ENCODE measurements at regions of chr14 and their contacts with region 1.

Region 1: GRCh38 chr14:57871459-57872080 is 5.7 kb upstream of the SLC35F4 start:
- DNase-seq: peak; percentile 2
- ATAC-seq: peak; percentile 96
- H3K4me3 ChIP-seq: no peak overlapping the region
- H3K27ac ChIP-seq: no peak overlapping the region
- H3K4me1 ChIP-seq: no peaks in the 10 kb centered on the region
- H3K27me3 ChIP-seq: no peaks in the 10 kb centered on the region
- CTCF ChIP-seq: peak; percentile 54 to 67 (median 60)
- EP300 ChIP-seq: no peak
- POLR2A ChIP-seq: no peak
- RAD21 ChIP-seq: peak; percentile 54

Region 2: GRCh38 chr14:57486767-57487379 is 384.7 kb before region 1 on chr14:
- CTCF ChIA-PET with region 1: interaction called, 16 read pairs
- POLR2A ChIA-PET with region 1: no interaction called
- RAD21 ChIA-PET with region 1: interaction called, 10 read pairs
- SMC1A ChIA-PET with region 1: interaction called, 7 read pairs
- in situ Hi-C with region 1: no loop called
- intact Hi-C with region 1: loop called (anchors 2 kb)
- DNase-seq: no peak
- ATAC-seq: peak; percentile 63
- H3K4me3 ChIP-seq: no peak overlapping the region
- H3K27ac ChIP-seq: no peak overlapping the region
- H3K4me1 ChIP-seq: peaks cover 11% of the 10 kb centered on the region
- H3K27me3 ChIP-seq: no peaks in the 10 kb centered on the region
- CTCF ChIP-seq: peak; percentile 59 to 76 (median 59)
- EP300 ChIP-seq: no peak
- POLR2A ChIP-seq: no peak
- RAD21 ChIP-seq: peak; percentile 59

Region 3: GRCh38 chr14:57526942-57527341 is 344.6 kb before region 1 on chr14:
- CTCF ChIA-PET with region 1: interaction called, 27 read pairs
- POLR2A ChIA-PET with region 1: no interaction called
- RAD21 ChIA-PET with region 1: interaction called, 5 read pairs
- SMC1A ChIA-PET with region 1: interaction called, 3 read pairs
- in situ Hi-C with region 1: no loop called
- intact Hi-C with region 1: no loop called
- DNase-seq: no peak
- ATAC-seq: peak; percentile 60
- H3K4me3 ChIP-seq: no peak overlapping the region
- H3K27ac ChIP-seq: no peak overlapping the region
- H3K4me1 ChIP-seq: no peaks in the 10 kb centered on the region
- H3K27me3 ChIP-seq: no peaks in the 10 kb centered on the region
- CTCF ChIP-seq: 0 out of 6 replicates have a peak, but pooled peaks of 1 of the 3 experiments have one; percentile 12
- EP300 ChIP-seq: no peak
- POLR2A ChIP-seq: no peak
- RAD21 ChIP-seq: no peak

Region 4: GRCh38 chr14:57574617-57575303 is 296.8 kb before region 1 on chr14:
- CTCF ChIA-PET with region 1: interaction called, 14 read pairs
- POLR2A ChIA-PET with region 1: no interaction called
- RAD21 ChIA-PET with region 1: no interaction called
- SMC1A ChIA-PET with region 1: interaction called, 5 read pairs
- in situ Hi-C with region 1: no loop called
- intact Hi-C with region 1: no loop called
- DNase-seq: no peak
- ATAC-seq: peak; percentile 44
- H3K4me3 ChIP-seq: no peak overlapping the region
- H3K27ac ChIP-seq: no peak overlapping the region
- H3K4me1 ChIP-seq: no peaks in the 10 kb centered on the region
- H3K27me3 ChIP-seq: no peaks in the 10 kb centered on the region
- CTCF ChIP-seq: peak in 1 of 3 experiments; percentile 37; a peak in 1 of 6 replicates
- EP300 ChIP-seq: no peak
- POLR2A ChIP-seq: no peak
- RAD21 ChIP-seq: no peak

Region 5: GRCh38 chr14:57692671-57693070 is 178.9 kb before region 1 on chr14:
- CTCF ChIA-PET with region 1: interaction called, 66 read pairs
- POLR2A ChIA-PET with region 1: no interaction called
- RAD21 ChIA-PET with region 1: interaction called, 23 read pairs
- SMC1A ChIA-PET with region 1: interaction called, 28 read pairs
- in situ Hi-C with region 1: no loop called
- intact Hi-C with region 1: loop called (anchors 1 kb)
- DNase-seq: no peak
- ATAC-seq: peak; percentile 61
- H3K4me3 ChIP-seq: no peak overlapping the region
- H3K27ac ChIP-seq: no peak overlapping the region
- H3K4me1 ChIP-seq: no peaks in the 10 kb centered on the region
- H3K27me3 ChIP-seq: no peaks in the 10 kb centered on the region
- CTCF ChIP-seq: peak; percentile 33 to 40 (median 35); a peak in 4 of 6 replicates
- EP300 ChIP-seq: no peak
- POLR2A ChIP-seq: no peak
- RAD21 ChIP-seq: peak; percentile 56; the same call in 1 of the 2 replicates

Region 6: GRCh38 chr14:57760896-57761295 is 110.7 kb before region 1 on chr14:
- CTCF ChIA-PET with region 1: no interaction called
- POLR2A ChIA-PET with region 1: no interaction called
- RAD21 ChIA-PET with region 1: no interaction called
- SMC1A ChIA-PET with region 1: no interaction called
- in situ Hi-C with region 1: no loop called
- intact Hi-C with region 1: no loop called
- DNase-seq: no peak
- ATAC-seq: no peak
- H3K4me3 ChIP-seq: no peak overlapping the region
- H3K27ac ChIP-seq: no peak overlapping the region
- H3K4me1 ChIP-seq: no peaks in the 10 kb centered on the region
- H3K27me3 ChIP-seq: no peaks in the 10 kb centered on the region; a peak in 1 of 4 replicates
- CTCF ChIP-seq: no peak
- EP300 ChIP-seq: no peak
- POLR2A ChIP-seq: no peak
- RAD21 ChIP-seq: no peak

Region 7: DNA sequence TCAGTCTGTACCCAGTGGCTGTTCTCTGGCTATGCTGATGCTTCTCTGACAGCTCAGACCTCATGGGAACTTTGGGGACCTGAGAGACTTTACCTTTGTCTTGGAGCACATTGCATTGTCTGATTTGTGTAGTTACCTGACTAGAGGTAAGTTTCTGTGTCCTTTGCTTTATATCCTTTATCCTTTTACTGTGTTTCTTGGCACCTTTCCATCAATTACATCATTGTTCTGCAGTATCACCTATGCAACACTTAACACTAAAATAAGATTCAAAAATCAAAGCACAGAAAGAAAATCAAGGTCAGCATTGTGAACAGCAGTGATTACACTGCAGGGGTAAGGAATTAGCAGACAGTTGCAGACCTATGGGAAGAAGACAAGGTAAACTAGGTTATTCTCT is 49.5 kb before region 1 on chr14:
- CTCF ChIA-PET with region 1: no interaction called
- POLR2A ChIA-PET with region 1: no interaction called
- RAD21 ChIA-PET with region 1: no interaction called
- SMC1A ChIA-PET with region 1: no interaction called
- in situ Hi-C with region 1: no loop called
- intact Hi-C with region 1: no loop called
- DNase-seq: no peak
- ATAC-seq: no peak
- H3K4me3 ChIP-seq: no peak overlapping the region
- H3K27ac ChIP-seq: no peak overlapping the region
- H3K4me1 ChIP-seq: no peaks in the 10 kb centered on the region
- H3K27me3 ChIP-seq: no peaks in the 10 kb centered on the region
- CTCF ChIP-seq: no peak
- EP300 ChIP-seq: no peak
- POLR2A ChIP-seq: no peak
- RAD21 ChIP-seq: no peak

Region 8: GRCh38 chr14:57889245-57889644 is 17.7 kb after region 1 on chr14:
- CTCF ChIA-PET with region 1: interaction called, 14 read pairs
- POLR2A ChIA-PET with region 1: no interaction called
- RAD21 ChIA-PET with region 1: interaction called, 3 read pairs
- SMC1A ChIA-PET with region 1: interaction called, 5 read pairs
- in situ Hi-C with region 1: no loop called
- intact Hi-C with region 1: no loop called
- DNase-seq: no peak
- ATAC-seq: no peak
- H3K4me3 ChIP-seq: no peak overlapping the region
- H3K27ac ChIP-seq: no peak overlapping the region
- H3K4me1 ChIP-seq: no peaks in the 10 kb centered on the region
- H3K27me3 ChIP-seq: no peaks in the 10 kb centered on the region
- CTCF ChIP-seq: no peak
- EP300 ChIP-seq: no peak
- POLR2A ChIP-seq: no peak
- RAD21 ChIP-seq: no peak

Region 9: DNA sequence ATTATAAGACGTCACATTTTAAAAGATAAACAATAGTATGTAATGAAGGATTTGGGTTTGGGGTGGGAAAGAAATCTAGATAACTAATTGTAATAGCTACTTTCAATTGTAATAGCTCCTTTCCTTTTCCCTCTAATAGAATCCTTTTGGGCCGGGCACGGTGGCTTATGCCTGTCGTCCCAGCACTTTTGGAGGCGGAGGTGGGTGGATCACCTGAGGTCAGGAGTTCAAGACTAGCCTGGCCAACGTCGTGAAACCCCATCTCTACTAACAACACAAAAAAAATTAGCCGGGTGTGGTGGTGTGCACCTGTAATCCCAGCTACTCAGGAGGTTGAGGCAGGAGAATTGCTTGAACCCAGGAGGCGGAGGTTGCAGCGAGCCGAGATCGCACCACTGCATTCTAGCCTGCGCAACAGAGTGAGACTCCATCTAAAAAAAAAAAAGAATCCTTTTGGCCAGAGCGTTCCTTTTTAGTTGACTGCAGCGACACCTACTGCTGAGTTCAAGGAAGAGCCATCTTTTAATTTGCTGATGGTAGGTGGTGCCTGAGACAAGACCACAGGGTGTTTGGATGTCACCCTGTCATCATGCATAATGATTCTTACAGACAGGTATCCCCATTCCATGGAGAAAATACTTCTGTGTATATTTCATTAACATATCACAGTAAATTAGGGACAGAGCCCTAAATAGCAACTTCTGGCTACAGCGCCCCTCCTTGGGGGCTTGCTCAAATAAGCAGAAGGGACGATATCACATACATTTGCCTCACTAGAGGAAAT is 200.9 kb after region 1 on chr14:
- CTCF ChIA-PET with region 1: interaction called, 11 read pairs
- POLR2A ChIA-PET with region 1: no interaction called
- RAD21 ChIA-PET with region 1: interaction called, 6 read pairs
- SMC1A ChIA-PET with region 1: no interaction called
- in situ Hi-C with region 1: no loop called
- intact Hi-C with region 1: no loop called
- DNase-seq: peak; percentile 13
- ATAC-seq: peak; percentile 91
- H3K4me3 ChIP-seq: no peak overlapping the region
- H3K27ac ChIP-seq: no peak overlapping the region
- H3K4me1 ChIP-seq: no peaks in the 10 kb centered on the region
- H3K27me3 ChIP-seq: no peaks in the 10 kb centered on the region
- CTCF ChIP-seq: peak; percentile 57 to 70 (median 69); a peak in 5 of 6 replicates
- EP300 ChIP-seq: no peak
- POLR2A ChIP-seq: no peak
- RAD21 ChIP-seq: peak; percentile 82

Measured in GM12878 (cell line).